Ascending aorta (tissue), 2 donors: ENCODE measurements at regions of chr16 and their contacts with region 1.

Region 1: DNA sequence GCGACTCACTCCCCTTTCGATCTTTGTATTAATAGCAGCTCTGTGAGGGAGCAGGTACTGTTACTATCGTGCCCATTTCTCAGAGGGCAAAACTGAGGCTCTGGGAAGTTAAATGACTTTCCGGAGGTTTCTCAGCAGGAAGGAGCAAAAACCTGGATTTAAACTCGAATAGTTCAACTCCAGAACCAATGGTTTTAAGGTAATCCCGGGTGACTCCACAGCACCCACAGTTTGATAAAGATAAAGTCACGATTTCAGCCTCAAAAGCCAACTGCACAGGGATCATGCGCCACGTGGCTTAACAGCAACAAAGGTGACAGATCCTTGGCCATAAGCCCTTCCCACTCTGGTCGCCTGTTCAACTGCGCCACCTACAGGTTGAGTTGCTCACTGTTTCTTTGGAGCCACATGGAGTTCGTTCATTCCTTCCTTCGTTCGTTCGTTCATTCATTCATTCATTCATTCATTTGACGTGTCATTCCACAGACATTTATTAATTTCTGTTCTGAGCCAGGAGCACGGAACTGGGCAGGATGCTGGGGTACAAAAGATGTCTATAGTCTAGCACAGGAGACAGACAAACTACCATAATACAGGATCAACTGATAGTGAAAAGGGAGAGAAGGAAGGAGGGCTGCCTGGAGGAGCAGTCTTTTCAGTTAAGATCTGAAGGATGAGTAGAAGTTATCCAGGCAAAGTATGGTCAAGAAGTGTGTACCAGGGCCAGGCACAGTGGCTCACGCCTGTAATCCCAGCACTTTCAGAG is 134.8 kb downstream of the HS3ST2 start:
- DNase-seq: peak; percentile 12 to 79
- H3K4me3 ChIP-seq: peak overlapping the region; percentile 26 to 53
- H3K27ac ChIP-seq: no peak overlapping the region
- H3K4me1 ChIP-seq: peaks cover 0 to 5% of the 10 kb centered on the region in 2 donors
- H3K27me3 ChIP-seq: no peaks in the 10 kb centered on the region
- CTCF ChIP-seq: peak; percentile 64 to 79 (median 76)

Region 2: DNA sequence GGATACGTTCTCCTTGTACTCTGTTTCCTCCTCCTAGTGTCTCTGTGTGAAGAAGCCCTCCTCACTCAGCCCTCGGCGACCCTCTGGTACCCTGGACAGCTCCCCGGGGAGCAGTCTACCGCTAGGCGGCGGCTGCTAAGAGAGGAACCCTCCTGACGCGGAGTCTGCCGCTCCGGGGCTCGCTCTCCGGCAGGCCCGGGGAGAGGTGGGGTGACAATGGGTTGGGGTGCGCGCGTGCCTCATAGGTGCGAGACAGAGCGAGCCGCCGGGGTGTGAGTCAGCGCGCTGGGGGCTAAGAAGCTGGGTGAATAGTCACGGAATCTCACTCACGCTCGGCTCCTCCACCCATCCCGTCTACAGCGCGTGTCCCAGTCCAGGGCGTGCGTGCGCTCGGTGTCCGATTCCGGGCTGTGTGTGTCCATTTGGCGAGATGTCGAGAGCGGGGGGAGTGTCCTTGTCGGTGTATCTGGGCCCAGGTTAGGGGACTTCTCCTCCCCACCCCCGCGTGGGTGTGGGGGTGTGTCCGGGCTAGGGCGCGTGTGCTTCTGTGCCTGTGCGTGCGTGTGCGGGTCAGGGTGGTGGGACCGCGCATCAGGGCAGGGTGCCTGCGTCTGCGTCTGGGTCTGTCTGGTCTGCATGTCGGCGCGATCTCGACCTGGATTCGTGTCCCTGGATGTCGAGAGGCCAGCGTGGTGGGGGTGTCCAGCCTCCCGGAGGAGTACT is 135.4 kb before region 1 on chr16:
- intact Hi-C with region 1: loop called (anchors 5 kb)
- DNase-seq: peak in 1 of 2 donors; percentile 74
- H3K4me3 ChIP-seq: peak overlapping the region; percentile 58 to 70
- H3K27ac ChIP-seq: peak overlapping the region; percentile 31 to 61
- H3K4me1 ChIP-seq: no peaks in the 10 kb centered on the region
- H3K27me3 ChIP-seq: no peaks in the 10 kb centered on the region
- CTCF ChIP-seq: peak; percentile 62 to 74 (median 66)

Region 3: DNA sequence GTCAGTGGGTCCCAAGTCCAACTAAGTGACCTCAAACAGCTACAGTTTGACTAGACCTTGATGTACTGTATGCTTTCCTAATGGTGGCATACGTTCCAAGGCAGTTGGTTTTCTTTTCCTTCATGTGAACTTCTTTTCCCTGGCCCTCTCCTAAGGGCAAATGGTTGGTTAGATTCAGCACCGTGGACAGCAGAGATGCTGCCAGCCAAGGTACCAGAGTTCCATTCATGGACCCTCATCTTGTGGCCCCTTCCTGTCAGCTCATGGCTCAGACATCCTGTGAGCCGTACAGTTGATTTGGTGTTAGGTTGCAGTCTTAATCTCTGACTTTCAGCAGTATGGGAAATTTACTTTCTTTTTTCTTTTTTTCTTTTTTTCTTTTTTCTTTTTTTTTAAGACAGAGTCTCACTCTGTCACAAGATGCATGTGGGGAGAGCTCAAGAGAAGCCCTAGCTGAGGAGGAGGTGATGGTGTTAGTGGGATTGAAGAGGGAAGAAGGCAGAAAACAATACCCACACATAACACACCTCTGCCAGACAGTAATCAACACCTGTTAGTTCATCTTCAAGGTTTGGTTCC is 78.1 kb after region 1 on chr16:
- intact Hi-C with region 1: no loop called
- DNase-seq: no peak
- H3K4me3 ChIP-seq: no peak overlapping the region
- H3K27ac ChIP-seq: no peak overlapping the region
- H3K4me1 ChIP-seq: no peaks in the 10 kb centered on the region
- H3K27me3 ChIP-seq: no peaks in the 10 kb centered on the region
- CTCF ChIP-seq: no peak

Region 4: DNA sequence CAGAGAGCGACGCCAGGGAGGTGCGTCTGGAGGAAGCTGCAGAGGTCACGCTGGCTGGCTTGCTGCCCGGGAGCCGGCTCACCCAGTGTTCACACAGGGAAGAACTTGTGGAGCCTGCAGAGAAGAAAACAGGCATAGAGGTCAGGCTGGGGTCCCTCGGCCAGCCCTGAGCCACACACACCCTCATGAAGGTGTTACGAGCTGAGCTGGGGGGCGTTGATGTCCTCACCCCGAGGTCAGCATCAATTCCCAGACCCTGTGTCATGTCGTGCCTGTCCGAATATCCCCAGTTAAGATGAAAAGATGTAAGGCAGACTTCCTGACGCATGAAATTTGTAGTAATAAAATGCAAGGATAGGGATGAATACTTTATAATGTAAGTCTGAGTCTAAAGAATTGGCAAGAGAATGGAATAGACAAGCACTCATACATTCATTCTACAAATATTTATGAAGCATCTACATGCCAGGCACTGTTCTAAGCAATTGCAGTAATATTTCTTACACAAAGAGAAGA is 123.4 kb after region 1 on chr16:
- intact Hi-C with region 1: no loop called
- DNase-seq: peak; percentile 34 to 80
- H3K4me3 ChIP-seq: peak overlapping the region; percentile 23 to 47
- H3K27ac ChIP-seq: peak overlapping the region; percentile 74 to 85
- H3K4me1 ChIP-seq: peaks cover 2 to 21% of the 10 kb centered on the region in 2 donors
- H3K27me3 ChIP-seq: no peaks in the 10 kb centered on the region
- CTCF ChIP-seq: no peak